ENCODE measurements at regions of chr4 and their contacts with region 1.

Region 1: DNA sequence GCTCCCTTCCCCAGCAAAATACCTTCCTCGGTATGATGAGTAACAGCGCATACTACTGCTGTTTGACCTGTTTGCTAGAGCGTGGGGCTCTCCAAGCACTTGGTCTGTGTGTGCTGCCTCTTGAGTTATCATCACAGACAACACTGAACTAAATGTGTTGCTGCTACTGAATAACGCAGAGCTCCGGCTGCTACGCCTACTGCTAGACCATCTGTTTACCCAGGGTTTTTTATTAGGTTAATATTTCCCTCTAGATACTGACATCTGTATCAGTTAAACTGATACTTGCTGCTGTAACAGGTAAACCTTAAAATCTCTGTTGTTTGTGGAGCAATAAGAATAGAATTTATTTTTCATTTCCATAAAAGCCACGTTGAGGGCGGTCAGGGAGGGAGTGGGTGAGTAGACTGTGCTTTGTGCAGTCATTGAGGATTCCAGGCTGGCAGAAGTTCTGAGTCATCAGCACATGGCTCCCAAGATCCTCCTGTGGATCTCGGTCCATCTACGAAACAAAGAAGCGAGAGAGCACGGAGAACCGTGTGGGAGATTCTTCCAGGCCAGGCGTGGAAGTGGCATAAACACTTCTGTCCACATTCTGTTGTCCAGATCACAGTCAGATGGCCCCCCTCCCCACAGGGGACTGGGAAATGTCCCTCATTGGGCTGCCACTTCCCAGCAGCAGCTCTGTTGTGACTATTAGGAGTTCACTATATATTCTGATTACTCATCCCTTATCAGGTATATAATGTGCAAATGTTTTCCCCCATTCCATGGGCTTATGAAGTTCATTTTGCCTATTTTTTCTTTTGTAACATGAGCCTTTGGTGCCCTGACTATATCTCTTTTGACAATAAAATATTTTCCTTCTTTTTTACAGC is 14.1 kb downstream of the GRK4 start:
- DNase-seq: no peak
- ATAC-seq: no peak
- H3K4me3 Mint-ChIP-seq: no peak overlapping the region
- H3K27ac Mint-ChIP-seq: no peak overlapping the region
- H3K4me1 Mint-ChIP-seq: no peaks in the 10 kb centered on the region
- H3K27me3 Mint-ChIP-seq: peaks cover 3% of the 10 kb centered on the region

Region 2: DNA sequence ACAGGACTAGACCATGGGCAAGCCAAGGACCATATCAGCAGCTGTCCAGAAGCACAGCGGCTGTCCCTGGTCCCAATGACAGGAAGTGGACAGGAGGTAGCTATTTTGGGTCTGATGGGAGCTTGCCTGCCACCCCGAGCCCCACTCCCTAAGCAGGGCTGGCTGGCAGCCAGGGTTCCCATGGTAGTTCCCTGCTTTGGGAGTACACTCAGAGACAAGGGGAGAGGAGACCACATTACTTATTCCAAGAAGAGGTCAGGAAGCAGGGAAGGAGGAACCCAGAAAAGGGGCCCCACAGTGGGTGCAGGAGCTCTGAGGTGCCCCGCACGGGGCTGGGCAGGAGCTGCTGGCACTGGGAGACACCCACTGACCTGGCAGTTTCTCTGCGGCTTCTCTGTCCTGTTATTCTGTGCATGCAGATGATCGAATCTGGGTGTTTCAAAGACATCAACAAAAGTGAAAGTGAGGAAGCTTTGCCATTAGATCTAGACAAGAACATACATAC is 60.6 kb after region 1 on chr4:
- CTCF ChIA-PET with region 1: interaction called, 19 read pairs
- POLR2A ChIA-PET with region 1: no interaction called
- intact Hi-C with region 1: loop called (anchors 1 to 2 kb)
- DNase-seq: peak; percentile 29
- ATAC-seq: peak; percentile 19
- H3K4me3 Mint-ChIP-seq: peak overlapping the region; percentile 34
- H3K27ac Mint-ChIP-seq: peak overlapping the region; percentile 11
- H3K4me1 Mint-ChIP-seq: peaks cover 36% of the 10 kb centered on the region
- H3K27me3 Mint-ChIP-seq: peaks cover 6% of the 10 kb centered on the region

Region 3: GRCh38 chr4:3054169-3054759 is 76.8 kb after region 1 on chr4:
- CTCF ChIA-PET with region 1: interaction called, 11 read pairs
- POLR2A ChIA-PET with region 1: no interaction called
- intact Hi-C with region 1: no loop called
- DNase-seq: no peak
- ATAC-seq: no peak
- H3K4me3 Mint-ChIP-seq: no peak overlapping the region
- H3K27ac Mint-ChIP-seq: no peak overlapping the region
- H3K4me1 Mint-ChIP-seq: no peaks in the 10 kb centered on the region
- H3K27me3 Mint-ChIP-seq: peaks cover 2% of the 10 kb centered on the region

Region 4: DNA sequence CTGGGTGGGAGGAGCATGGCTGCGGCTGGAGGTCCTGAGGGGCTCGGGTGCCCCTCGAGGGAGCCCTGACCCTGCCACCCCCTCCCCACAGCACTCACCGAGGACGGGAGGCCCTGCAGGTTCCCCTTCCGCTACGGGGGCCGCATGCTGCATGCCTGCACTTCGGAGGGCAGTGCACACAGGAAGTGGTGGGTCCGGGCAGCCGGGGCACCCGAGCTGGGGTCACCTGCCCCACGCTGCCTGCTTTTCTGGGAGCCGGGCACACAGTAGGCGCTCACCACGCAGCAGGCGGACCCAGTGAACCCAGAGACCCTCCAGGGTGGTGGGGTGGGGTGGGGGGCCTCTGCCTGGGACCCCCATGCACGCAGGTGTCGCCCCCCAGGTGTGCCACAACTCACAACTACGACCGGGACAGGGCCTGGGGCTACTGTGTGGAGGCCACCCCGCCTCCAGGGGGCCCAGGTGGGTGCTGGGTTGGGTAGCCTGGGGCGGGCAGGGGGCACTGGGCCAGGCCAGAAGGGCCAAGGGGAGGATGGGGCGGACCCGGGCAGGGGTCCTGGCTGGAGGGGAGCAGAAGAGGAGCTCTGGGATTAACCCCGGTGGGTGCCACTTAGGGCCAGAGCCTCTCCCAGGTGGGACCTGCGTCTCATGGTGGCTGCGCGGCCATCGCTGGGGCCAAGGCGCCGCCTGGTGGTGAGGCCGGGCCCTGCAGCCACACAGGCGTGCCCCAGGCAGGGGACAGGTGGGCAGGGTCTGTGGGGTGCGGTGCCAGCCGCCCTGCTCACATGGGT is 465.7 kb after region 1 on chr4:
- CTCF ChIA-PET with region 1: no interaction called
- POLR2A ChIA-PET with region 1: no interaction called
- intact Hi-C with region 1: no loop called
- DNase-seq: peak; percentile 83
- ATAC-seq: peak; percentile 89
- H3K4me3 Mint-ChIP-seq: no peak overlapping the region
- H3K27ac Mint-ChIP-seq: no peak overlapping the region
- H3K4me1 Mint-ChIP-seq: no peaks in the 10 kb centered on the region
- H3K27me3 Mint-ChIP-seq: no peaks in the 10 kb centered on the region

Region 5: GRCh38 chr4:3715061-3715854 is 737.8 kb after region 1 on chr4:
- CTCF ChIA-PET with region 1: no interaction called
- POLR2A ChIA-PET with region 1: no interaction called
- intact Hi-C with region 1: no loop called
- DNase-seq: no peak
- ATAC-seq: no peak
- H3K4me3 Mint-ChIP-seq: no peak overlapping the region
- H3K27ac Mint-ChIP-seq: no peak overlapping the region
- H3K4me1 Mint-ChIP-seq: no peaks in the 10 kb centered on the region
- H3K27me3 Mint-ChIP-seq: peaks cover 15% of the 10 kb centered on the region